ENCODE measurements at regions of chr1 and their contacts with region 1.

Region 1: GRCh38 chr1:163528710-163529348 is 207.1 kb downstream of the NUF2 start:
- DNase-seq: no peak
- ATAC-seq: no peak

Region 2: DNA sequence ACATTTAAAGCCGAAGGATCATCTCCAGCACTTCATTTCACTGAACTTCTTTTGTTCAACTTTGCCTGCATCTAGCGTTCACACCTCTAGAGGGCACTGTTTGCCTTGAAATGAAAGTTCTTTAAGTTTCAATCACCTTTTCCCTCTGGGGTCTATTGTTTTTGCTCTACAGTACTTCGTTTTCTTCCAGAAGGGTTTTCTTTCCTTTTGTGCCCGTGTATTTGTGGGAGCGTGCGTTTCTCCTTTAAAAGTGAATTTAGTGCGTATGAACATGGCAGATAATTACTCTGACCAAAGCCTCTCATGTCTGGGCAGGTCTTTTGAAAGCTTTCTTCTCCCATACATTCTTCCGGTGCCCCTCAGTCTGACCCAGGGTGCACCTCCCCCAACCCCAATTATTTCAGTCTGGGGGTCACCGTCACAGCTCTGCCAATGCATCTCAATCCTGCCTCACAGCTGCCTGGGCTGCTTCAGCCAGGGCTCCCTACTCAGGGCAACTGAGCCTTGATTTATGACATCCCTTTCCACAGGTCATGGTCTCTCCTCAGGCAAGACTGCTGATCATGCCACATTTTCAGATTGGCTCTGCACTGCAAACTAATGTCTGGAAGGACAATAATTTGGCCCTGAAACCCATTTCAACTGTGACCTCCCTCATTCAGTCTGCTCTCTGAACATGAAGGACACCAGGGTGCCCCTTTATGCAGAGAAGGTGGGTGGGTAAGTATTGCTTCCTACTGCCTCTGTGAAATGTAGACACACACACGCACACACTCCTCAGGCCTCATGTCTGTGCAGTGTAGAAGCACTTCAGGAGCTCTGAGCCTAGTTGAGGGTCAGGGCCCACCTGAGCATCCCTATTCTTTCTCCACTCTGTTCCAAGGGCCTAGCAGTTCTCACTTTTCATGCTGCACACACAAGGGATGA is 118.5 kb before region 1 on chr1:
- intact Hi-C with region 1: loop called (anchors 5 kb)
- DNase-seq: no peak
- ATAC-seq: no peak

Region 3: DNA sequence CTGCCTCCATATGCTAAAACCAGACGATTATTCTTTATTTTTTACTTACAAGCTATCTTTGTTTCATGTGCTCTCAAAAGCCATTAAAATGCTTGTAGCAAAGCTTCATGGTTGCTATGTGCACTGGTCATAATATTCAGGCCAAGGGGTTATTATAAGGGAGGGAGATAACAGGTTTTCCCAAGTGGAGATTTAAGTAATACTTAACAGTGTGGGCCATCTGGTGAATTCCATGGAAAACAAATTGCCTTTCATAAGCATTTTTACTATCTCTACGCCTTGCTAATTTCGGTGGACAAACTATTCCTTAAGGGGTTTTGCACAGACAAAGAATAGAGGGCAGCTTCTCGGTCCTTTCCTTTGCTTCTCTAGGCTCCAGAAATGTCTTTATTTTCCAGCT is 69.3 kb before region 1 on chr1:
- intact Hi-C with region 1: no loop called
- DNase-seq: no peak
- ATAC-seq: peak; percentile 79